ENCODE measurements at regions of chr3 and their contacts with region 1.

Region 1: GRCh38 chr3:37974121-37975083 is 16.2 kb upstream of the VILL start:
- DNase-seq: peak; percentile 72
- H3K4me3 ChIP-seq: no peak overlapping the region
- H3K27ac ChIP-seq: no peak overlapping the region
- H3K4me1 ChIP-seq: no peaks in the 10 kb centered on the region
- H3K27me3 ChIP-seq: no peaks in the 10 kb centered on the region

Region 2: GRCh38 chr3:37779289-37780152 is 194.9 kb before region 1 on chr3:
- in situ Hi-C with region 1: no loop called
- DNase-seq: peak; percentile 83
- H3K4me3 ChIP-seq: no peak overlapping the region
- H3K27ac ChIP-seq: no peak overlapping the region
- H3K4me1 ChIP-seq: no peaks in the 10 kb centered on the region
- H3K27me3 ChIP-seq: 0 out of 2 replicates have a peak, but pooled peaks cover 5% of the 10 kb centered on the region

Region 3: DNA sequence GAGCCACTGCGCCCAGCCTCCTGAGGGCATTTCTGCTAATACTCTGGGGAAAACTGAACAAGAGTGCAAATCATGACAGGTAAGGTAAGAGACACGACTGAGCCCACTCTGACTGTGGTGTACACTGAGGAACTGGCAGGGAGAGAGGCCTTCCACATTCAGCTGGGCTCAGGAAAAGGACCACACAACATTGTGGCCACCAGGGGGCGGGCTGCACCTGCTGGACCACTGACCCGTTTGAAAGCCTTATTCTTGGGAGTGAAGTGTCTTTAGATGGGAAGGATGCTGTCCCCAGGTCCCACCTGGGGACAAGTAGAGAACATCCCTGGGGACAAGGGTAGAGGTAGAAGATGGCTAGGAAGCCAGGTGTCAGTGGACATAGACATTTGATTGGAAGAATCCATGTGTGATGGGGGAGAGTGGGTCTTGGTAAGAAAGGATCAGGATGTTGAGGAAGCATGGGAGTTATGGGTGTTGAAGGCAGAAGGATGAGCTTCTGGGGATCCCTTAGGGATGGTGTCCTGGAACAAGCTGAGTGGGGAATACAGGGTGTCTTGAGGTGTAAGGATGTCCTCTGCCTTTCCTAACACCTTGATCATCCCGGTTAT is 118.9 kb before region 1 on chr3:
- in situ Hi-C with region 1: loop called (anchors 10 kb)
- DNase-seq: peak; percentile 77
- H3K4me3 ChIP-seq: no peak overlapping the region
- H3K27ac ChIP-seq: no peak overlapping the region
- H3K4me1 ChIP-seq: peaks cover 7% of the 10 kb centered on the region; the same call in 1 of the 2 replicates
- H3K27me3 ChIP-seq: no peaks in the 10 kb centered on the region